ENCODE measurements at regions of chr16 and their contacts with region 1.

Region 1: DNA sequence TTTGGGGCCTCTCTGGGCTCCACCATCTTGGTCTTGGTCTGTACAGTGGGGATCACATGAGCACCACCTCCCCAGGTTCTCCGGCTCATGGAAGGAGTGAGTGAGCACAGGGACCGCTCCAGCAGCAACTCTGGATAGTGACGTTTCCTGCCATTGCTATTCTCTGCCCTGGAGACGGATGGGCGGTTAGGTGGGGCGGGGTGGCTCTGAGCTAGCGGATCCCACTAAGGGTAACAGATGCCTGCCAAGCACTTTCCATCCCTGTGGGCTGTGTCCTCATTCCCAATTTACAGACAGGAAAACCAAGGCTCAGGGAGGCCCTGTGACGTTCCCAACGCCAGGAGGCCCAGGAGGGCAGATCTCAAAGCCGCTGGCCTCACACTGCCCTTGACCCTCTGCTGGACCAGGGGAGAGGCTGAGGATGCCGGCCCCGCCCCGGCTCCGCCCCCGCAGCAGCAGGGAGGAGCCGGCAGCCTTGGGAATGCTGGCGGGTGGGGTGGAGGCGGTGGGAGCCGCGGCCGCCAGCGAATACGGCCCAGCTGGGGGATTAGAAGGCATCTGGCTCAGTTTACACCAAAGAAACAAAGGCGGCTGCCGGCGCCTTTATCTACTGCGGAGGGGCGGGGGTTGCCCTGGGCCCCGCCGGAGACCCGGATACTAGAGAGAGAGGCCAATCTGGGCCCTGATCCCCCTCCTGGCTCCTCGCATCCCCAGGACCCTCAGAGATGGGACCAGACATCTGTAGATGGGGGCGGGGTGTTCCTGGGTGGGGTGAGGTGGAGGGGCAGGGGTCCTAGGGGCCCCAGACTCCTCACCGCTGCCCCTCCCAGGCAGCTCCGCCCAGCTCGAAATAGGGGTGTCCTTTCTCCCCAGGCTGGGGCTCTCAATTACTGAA is 122.3 kb upstream of the CIBAR2 start:
- DNase-seq: peak; percentile 91 to 95 (median 92)
- H3K4me3 ChIP-seq: peak overlapping the region; percentile 47
- H3K27ac ChIP-seq: peak overlapping the region; percentile 75 to 81
- H3K4me1 ChIP-seq: peaks cover 41% of the 10 kb centered on the region
- H3K27me3 ChIP-seq: no peaks in the 10 kb centered on the region
- CTCF ChIP-seq: peak in 2 of 3 donors; percentile 7 to 59
- EP300 ChIP-seq: no peak
- POLR2A ChIP-seq: peak; percentile 44

Region 2: GRCh38 chr16:85114909-85115567 is 119.5 kb before region 1 on chr16:
- intact Hi-C with region 1: loop called in 1 of 4 experiments (anchors 10 kb)
- DNase-seq: peak; percentile 84 to 94 (median 91)
- H3K4me3 ChIP-seq: no peak overlapping the region
- H3K27ac ChIP-seq: no peak overlapping the region
- H3K4me1 ChIP-seq: peaks cover 1% of the 10 kb centered on the region
- H3K27me3 ChIP-seq: no peaks in the 10 kb centered on the region
- CTCF ChIP-seq: peak; percentile 91 to 98 (median 95)
- EP300 ChIP-seq: no peak
- POLR2A ChIP-seq: no peak

Region 3: GRCh38 chr16:85126705-85127419 is 107.7 kb before region 1 on chr16:
- intact Hi-C with region 1: loop called in 2 of 4 experiments (anchors 5 to 10 kb)
- DNase-seq: peak; percentile 54 to 77 (median 67)
- H3K4me3 ChIP-seq: no peak overlapping the region
- H3K27ac ChIP-seq: no peak overlapping the region
- H3K4me1 ChIP-seq: peaks cover 13% of the 10 kb centered on the region
- H3K27me3 ChIP-seq: no peaks in the 10 kb centered on the region
- CTCF ChIP-seq: no peak
- EP300 ChIP-seq: no peak
- POLR2A ChIP-seq: no peak

Region 4: DNA sequence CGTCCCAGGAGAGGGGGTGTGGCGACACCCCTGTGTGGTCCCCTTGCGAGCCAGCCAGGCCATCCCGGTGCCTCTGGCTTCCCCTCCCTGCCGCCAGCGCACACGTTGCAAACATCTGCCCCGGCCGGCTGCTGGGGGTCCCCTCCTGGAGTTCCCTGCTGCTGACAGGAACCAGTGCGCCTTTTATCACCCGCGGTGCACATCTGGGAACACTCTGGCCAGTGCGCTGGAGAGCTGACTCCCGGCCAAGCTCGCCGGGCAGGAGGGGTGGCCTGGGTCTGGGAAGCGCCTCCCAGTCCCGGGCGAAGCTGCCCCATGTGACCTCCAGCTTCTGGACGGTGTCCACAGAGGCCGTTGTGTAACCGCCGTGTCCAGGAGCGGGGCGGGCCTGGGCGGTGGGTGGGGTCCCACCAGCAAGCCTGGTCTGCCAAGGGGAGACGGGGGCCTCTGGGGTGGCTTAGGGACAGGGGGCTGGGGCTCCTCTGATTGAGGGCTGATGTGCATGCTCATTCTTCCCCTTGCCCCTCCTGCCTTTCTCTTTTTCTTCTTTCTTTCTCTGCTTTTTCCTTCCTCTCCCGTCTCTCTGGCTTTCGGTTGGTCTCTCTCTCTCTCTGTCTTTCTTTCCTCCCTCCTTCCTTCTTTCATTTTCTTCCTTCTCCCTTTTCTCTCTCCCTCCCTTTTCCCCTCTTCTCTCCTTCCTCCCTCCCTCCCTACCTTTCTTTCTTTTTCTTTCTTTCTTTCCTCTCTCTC is 97.1 kb before region 1 on chr16:
- intact Hi-C with region 1: loop called in 2 of 4 experiments (anchors 5 to 10 kb)
- DNase-seq: peak; percentile 97 to 98 (median 97)
- H3K4me3 ChIP-seq: peak overlapping the region; percentile 28
- H3K27ac ChIP-seq: peak overlapping the region; percentile 16 to 85
- H3K4me1 ChIP-seq: peaks cover 11% of the 10 kb centered on the region
- H3K27me3 ChIP-seq: no peaks in the 10 kb centered on the region
- CTCF ChIP-seq: no peak
- EP300 ChIP-seq: peak; percentile 56
- POLR2A ChIP-seq: no peak

Region 5: DNA sequence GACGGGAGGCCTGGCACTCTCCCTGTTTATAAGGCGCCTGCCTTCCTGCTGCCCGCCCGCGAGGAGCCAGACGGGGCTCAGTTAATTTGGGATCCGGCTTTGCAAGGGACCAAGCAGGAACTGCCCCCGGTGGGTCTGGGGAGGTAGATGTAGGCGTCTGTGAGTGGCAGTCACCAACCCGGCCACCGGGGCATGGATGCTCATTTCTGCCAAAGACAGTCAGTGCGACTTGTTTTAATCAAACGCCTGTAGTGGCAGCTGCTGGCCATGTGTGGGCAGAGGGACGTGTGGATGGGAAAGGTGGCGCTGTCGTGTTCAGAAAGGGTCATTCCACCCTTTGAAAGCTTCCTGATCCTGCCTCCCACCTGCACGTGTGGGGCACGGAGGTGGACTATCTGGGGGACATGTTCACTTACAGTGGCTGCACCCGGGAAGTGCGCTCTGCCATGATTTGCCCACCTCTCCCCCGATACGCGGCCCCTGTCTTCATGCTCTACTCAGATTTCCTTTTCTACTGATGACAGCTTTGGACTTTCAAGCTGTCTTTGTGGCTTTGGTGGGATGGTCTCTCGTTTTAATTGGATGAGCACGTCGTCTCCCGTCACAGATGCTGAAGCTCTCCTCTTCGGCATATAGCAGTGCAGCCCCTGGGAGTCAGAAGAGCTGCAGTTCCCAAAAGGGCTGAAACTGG is 62.0 kb before region 1 on chr16:
- intact Hi-C with region 1: loop called in 3 of 4 experiments (anchors 5 to 10 kb)
- DNase-seq: peak in 1 of 5 donors; percentile 50
- H3K4me3 ChIP-seq: peak overlapping the region; percentile 6
- H3K27ac ChIP-seq: peak overlapping the region in 1 of 2 donors; percentile 18
- H3K4me1 ChIP-seq: peaks cover 36% of the 10 kb centered on the region
- H3K27me3 ChIP-seq: no peaks in the 10 kb centered on the region
- CTCF ChIP-seq: no peak
- EP300 ChIP-seq: no peak
- POLR2A ChIP-seq: no peak

Region 6: GRCh38 chr16:85195900-85196772 is 38.4 kb before region 1 on chr16:
- intact Hi-C with region 1: loop called in 1 of 4 experiments (anchors 5 kb)
- DNase-seq: peak; percentile 85 to 90 (median 87)
- H3K4me3 ChIP-seq: no peak overlapping the region
- H3K27ac ChIP-seq: peak overlapping the region; percentile 18 to 83
- H3K4me1 ChIP-seq: peaks cover 50% of the 10 kb centered on the region
- H3K27me3 ChIP-seq: no peaks in the 10 kb centered on the region
- CTCF ChIP-seq: no peak
- EP300 ChIP-seq: no peak
- POLR2A ChIP-seq: no peak

Region 7: GRCh38 chr16:85498273-85499006 is 263.9 kb after region 1 on chr16:
- intact Hi-C with region 1: no loop called
- DNase-seq: no peak
- H3K4me3 ChIP-seq: no peak overlapping the region
- H3K27ac ChIP-seq: no peak overlapping the region
- H3K4me1 ChIP-seq: peaks cover 3% of the 10 kb centered on the region
- H3K27me3 ChIP-seq: no peaks in the 10 kb centered on the region
- CTCF ChIP-seq: no peak
- EP300 ChIP-seq: no peak
- POLR2A ChIP-seq: no peak